T-cell (primary cell): ENCODE measurements at regions of chr12 and their contacts with region 1.

Region 1: GRCh38 chr12:66453844-66454243 is 151.6 kb downstream of the HELB start:
- DNase-seq: no peak
- ATAC-seq: no peak
- H3K4me3 ChIP-seq: no peak overlapping the region
- H3K4me3 Mint-ChIP-seq: no peak overlapping the region
- H3K27ac ChIP-seq: no peak overlapping the region
- H3K27ac Mint-ChIP-seq: no peak overlapping the region
- H3K4me1 ChIP-seq: no peaks in the 10 kb centered on the region
- H3K4me1 Mint-ChIP-seq: no peaks in the 10 kb centered on the region
- H3K27me3 ChIP-seq: peaks cover 0 to 3% of the 10 kb centered on the region in 2 experiments
- H3K27me3 Mint-ChIP-seq: peaks cover 2 to 3% of the 10 kb centered on the region in 2 donors

Region 2: DNA sequence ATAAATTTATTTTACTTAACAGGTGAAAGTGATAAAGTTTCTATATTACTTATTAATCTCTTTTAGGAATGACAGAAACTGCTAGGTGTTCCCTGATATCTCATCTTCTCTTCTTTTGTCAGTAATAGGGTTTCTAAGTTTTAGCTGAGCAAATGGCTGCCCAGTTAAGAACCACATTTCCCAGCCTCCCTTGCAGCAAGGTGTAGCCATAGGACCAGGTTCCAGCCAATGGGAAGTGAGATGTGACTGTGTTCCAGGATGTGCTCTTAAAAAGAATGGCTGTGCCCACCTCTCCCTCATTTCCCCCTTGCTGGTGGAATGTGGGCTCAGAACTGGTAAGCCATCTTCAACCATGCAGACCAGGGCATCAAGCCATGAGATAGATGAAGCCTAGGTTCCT is 14.1 kb after region 1 on chr12:
- CTCF ChIA-PET with region 1: no interaction called
- POLR2A ChIA-PET with region 1: interaction called in 1 of 2 experiments, 11 read pairs
- DNase-seq: peak in 1 of 35 experiments; percentile 2
- ATAC-seq: peak in 1 of 4 experiments; percentile 36
- H3K4me3 ChIP-seq: no peak overlapping the region
- H3K4me3 Mint-ChIP-seq: no peak overlapping the region
- H3K27ac ChIP-seq: no peak overlapping the region
- H3K27ac Mint-ChIP-seq: no peak overlapping the region
- H3K4me1 ChIP-seq: no peaks in the 10 kb centered on the region
- H3K4me1 Mint-ChIP-seq: no peaks in the 10 kb centered on the region
- H3K27me3 ChIP-seq: peaks cover 0 to 5% of the 10 kb centered on the region in 2 experiments
- H3K27me3 Mint-ChIP-seq: peaks cover 13 to 14% of the 10 kb centered on the region in 2 donors